ENCODE measurements at regions of chr3 and their contacts with region 1.

Region 1: DNA sequence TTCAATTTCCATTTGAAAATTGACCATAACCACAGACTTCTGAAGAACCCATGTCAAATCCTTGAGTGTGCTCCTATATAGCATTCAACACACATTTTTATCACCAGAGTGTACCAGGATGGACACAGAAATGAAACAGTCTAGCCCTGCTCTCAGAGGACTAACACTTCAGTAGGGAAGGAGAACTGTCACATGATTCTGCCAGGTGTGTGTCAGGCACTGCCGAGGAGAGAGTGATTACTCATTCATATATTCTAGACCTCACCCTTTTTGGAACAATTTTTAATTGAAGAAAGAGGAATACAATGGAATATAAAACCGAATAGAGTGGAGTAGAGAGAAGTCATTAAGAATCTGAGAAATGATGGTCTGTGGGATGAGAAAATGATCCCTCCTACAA is 125.8 kb downstream of the ERC2 start:
- DNase-seq: no peak
- H3K4me3 ChIP-seq: no peak overlapping the region
- H3K27ac ChIP-seq: no peak overlapping the region
- H3K4me1 ChIP-seq: peaks cover 3% of the 10 kb centered on the region
- H3K27me3 ChIP-seq: no peaks in the 10 kb centered on the region
- CTCF ChIP-seq: no peak

Region 2: DNA sequence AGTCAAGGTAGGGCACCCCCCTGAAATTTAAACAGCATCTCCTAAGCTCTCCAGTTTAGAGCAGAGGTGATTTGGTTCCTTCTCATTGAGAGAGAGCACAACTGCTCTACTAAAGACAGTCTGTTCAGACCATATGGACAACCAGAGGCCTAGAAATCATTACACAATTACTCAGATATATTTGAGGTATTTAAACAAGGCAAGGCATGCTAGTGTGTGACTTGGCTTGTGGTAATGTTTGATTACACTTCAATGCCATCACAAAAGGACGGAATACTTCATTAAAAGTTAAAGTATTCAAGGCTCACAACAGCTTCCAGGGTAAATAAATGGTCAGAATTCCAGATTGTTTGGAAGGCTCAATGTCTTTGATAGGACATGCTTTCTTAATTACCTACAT is 1524.8 kb before region 1 on chr3:
- CTCF ChIA-PET with region 1: no interaction called
- POLR2A ChIA-PET with region 1: no interaction called
- intact Hi-C with region 1: no loop called
- DNase-seq: no peak
- H3K4me3 ChIP-seq: no peak overlapping the region
- H3K27ac ChIP-seq: no peak overlapping the region
- H3K4me1 ChIP-seq: peaks cover 13% of the 10 kb centered on the region
- H3K27me3 ChIP-seq: peaks cover 59% of the 10 kb centered on the region
- CTCF ChIP-seq: no peak

Region 3: DNA sequence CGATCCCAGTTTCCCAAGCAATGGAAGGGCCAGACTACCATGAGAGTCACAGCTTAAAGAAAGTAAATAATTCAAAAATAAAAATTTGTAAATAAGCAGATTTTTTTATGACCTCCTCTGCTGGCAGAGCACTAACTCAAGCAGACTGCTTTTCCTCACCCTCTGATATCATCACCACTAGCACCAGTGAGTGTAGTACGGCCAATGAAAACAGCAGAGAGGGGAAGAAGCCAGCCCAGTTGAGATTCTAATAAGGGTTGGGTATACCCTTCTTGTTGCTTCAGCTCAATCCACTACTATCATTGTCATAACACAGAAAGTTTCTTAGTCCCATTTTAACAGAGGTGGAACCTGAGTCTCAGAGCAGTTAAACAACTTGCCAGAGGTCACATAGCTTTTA is 67.4 kb before region 1 on chr3:
- CTCF ChIA-PET with region 1: no interaction called
- POLR2A ChIA-PET with region 1: no interaction called
- intact Hi-C with region 1: no loop called
- DNase-seq: no peak
- H3K4me3 ChIP-seq: no peak overlapping the region
- H3K27ac ChIP-seq: no peak overlapping the region
- H3K4me1 ChIP-seq: no peaks in the 10 kb centered on the region
- H3K27me3 ChIP-seq: no peaks in the 10 kb centered on the region
- CTCF ChIP-seq: no peak

Region 4: DNA sequence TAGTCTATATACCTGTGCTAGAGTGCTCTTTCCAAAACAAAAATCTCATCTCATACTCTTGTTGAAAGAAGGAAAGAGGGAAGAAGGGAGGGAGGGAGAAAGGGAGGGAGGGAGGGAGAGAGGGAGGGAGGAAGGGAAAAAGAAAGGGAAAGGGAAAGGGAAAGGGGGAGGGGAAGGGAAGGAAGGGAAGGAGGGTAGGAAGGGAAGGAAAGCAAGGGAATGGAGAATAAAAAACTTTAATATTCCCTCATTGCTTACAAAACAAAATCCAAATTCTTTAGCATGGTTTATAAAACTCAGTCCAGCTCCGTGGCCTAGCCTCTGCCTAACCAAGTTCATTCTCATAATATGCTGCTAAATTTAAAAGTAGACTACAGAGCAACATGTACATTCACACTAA is 21.2 kb after region 1 on chr3:
- CTCF ChIA-PET with region 1: no interaction called
- POLR2A ChIA-PET with region 1: no interaction called
- intact Hi-C with region 1: loop called (anchors 1 kb)
- DNase-seq: no peak
- H3K4me3 ChIP-seq: no peak overlapping the region
- H3K27ac ChIP-seq: no peak overlapping the region
- H3K4me1 ChIP-seq: no peaks in the 10 kb centered on the region
- H3K27me3 ChIP-seq: no peaks in the 10 kb centered on the region
- CTCF ChIP-seq: no peak

Region 5: GRCh38 chr3:56453011-56453410 is 110.5 kb after region 1 on chr3:
- CTCF ChIA-PET with region 1: no interaction called
- POLR2A ChIA-PET with region 1: no interaction called
- intact Hi-C with region 1: loop called (anchors 5 kb)
- DNase-seq: peak; percentile 16
- H3K4me3 ChIP-seq: no peak overlapping the region
- H3K27ac ChIP-seq: no peak overlapping the region
- H3K4me1 ChIP-seq: no peaks in the 10 kb centered on the region
- H3K27me3 ChIP-seq: peaks cover 6% of the 10 kb centered on the region
- CTCF ChIP-seq: no peak

Region 6: GRCh38 chr3:56494686-56495322 is 152.3 kb after region 1 on chr3:
- CTCF ChIA-PET with region 1: interaction called, 11 read pairs
- POLR2A ChIA-PET with region 1: no interaction called
- intact Hi-C with region 1: no loop called
- DNase-seq: peak; percentile 77
- H3K4me3 ChIP-seq: no peak overlapping the region
- H3K27ac ChIP-seq: no peak overlapping the region
- H3K4me1 ChIP-seq: no peaks in the 10 kb centered on the region
- H3K27me3 ChIP-seq: no peaks in the 10 kb centered on the region
- CTCF ChIP-seq: peak; percentile 75

Region 7: GRCh38 chr3:56825567-56826438 is 483.3 kb after region 1 on chr3:
- CTCF ChIA-PET with region 1: no interaction called
- POLR2A ChIA-PET with region 1: no interaction called
- intact Hi-C with region 1: no loop called
- DNase-seq: no peak
- H3K4me3 ChIP-seq: no peak overlapping the region
- H3K27ac ChIP-seq: no peak overlapping the region
- H3K4me1 ChIP-seq: no peaks in the 10 kb centered on the region
- H3K27me3 ChIP-seq: no peaks in the 10 kb centered on the region
- CTCF ChIP-seq: no peak

Measured in A673 (cell line).